Thyroid gland (tissue), 4 donors: ENCODE measurements at regions of chr6 and their contacts with region 1.

Region 1: GRCh38 chr6:33689879-33690278 is 21.6 kb downstream of the UQCC2 start:
- DNase-seq: no peak
- H3K4me3 ChIP-seq: no peak overlapping the region
- H3K27ac ChIP-seq: no peak overlapping the region
- H3K4me1 ChIP-seq: peaks cover 0 to 9% of the 10 kb centered on the region in 2 donors
- H3K27me3 ChIP-seq: no peaks in the 10 kb centered on the region
- CTCF ChIP-seq: no peak
- POLR2A ChIP-seq: no peak

Region 2: DNA sequence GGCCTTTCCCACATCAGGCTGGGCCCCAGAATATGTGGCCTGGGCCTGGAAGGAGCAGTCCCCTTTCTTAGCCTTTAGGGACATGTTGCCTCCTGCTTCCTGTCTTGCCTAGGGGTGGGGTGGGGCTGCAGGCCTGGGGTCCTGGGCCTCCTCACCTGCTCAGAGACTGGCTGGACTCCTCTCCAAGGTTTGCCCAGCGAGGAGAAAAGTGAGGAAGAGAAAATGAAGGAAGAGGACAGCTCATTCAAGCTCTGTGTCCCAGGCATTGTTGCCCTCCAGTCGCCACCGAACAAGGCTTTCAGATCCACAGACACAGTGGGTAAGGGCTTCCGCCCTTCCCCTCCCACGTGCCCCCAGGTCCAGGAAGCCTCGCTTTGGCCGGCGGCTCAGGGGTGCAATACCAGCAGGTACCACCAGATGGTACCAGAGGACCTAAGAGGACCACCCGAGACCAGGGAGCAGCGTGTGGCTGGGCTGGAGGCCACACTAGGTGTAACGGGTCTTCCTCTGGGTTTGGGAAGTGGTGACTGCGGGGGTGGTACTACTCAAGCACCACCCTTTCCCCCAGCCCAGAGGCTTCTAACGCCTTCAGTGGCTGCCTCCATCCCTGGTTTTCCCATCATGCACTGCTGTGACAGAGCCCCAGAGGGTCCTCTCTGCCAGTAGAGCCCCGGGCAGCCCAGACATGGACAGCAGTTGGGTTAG is 104.3 kb before region 1 on chr6:
- intact Hi-C with region 1: no loop called
- DNase-seq: peak; percentile 81 to 82
- H3K4me3 ChIP-seq: no peak overlapping the region
- H3K27ac ChIP-seq: no peak overlapping the region
- H3K4me1 ChIP-seq: peaks cover 8 to 23% of the 10 kb centered on the region in 2 donors
- H3K27me3 ChIP-seq: no peaks in the 10 kb centered on the region
- CTCF ChIP-seq: peak; percentile 96 to 99 (median 98)
- POLR2A ChIP-seq: no peak

Region 3: GRCh38 chr6:33638556-33638955 is 51.3 kb before region 1 on chr6:
- intact Hi-C with region 1: loop called (anchors 5 kb)
- DNase-seq: no peak
- H3K4me3 ChIP-seq: no peak overlapping the region
- H3K27ac ChIP-seq: peak overlapping the region in 1 of 3 donors; percentile 18
- H3K4me1 ChIP-seq: peaks cover 12 to 20% of the 10 kb centered on the region in 2 donors
- H3K27me3 ChIP-seq: no peaks in the 10 kb centered on the region
- CTCF ChIP-seq: no peak
- POLR2A ChIP-seq: no peak